T-cell (primary cell): ENCODE measurements at regions of chr4 and their contacts with region 1.

Region 1: DNA sequence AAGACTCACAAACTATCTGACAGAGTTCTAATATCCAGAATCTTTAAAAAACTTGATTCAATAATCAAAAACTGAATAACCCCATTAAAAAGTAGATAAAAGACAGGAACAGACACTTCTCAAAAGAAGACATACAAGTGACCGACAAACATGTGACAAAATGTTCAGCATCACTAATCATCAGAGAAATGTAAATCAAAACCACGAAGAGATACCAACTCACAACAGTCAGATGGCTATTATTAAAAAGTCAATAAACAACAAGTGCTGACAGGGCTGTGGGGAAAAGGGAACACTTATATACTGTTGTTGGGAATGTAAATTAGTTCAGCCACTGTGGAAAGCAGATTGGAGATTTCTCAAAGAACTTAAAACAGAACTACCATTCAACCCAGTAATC is 138.1 kb upstream of the RASGEF1B start:
- DNase-seq: no peak
- ATAC-seq: no peak
- H3K4me3 ChIP-seq: no peak overlapping the region
- H3K4me3 Mint-ChIP-seq: no peak overlapping the region
- H3K27ac ChIP-seq: no peak overlapping the region
- H3K27ac Mint-ChIP-seq: no peak overlapping the region
- H3K4me1 ChIP-seq: peaks cover 0 to 13% of the 10 kb centered on the region in 2 experiments
- H3K4me1 Mint-ChIP-seq: peaks cover 5 to 9% (median 7%) of the 10 kb centered on the region in 3 donors
- H3K27me3 ChIP-seq: no peaks in the 10 kb centered on the region
- H3K27me3 Mint-ChIP-seq: no peaks in the 10 kb centered on the region

Region 2: DNA sequence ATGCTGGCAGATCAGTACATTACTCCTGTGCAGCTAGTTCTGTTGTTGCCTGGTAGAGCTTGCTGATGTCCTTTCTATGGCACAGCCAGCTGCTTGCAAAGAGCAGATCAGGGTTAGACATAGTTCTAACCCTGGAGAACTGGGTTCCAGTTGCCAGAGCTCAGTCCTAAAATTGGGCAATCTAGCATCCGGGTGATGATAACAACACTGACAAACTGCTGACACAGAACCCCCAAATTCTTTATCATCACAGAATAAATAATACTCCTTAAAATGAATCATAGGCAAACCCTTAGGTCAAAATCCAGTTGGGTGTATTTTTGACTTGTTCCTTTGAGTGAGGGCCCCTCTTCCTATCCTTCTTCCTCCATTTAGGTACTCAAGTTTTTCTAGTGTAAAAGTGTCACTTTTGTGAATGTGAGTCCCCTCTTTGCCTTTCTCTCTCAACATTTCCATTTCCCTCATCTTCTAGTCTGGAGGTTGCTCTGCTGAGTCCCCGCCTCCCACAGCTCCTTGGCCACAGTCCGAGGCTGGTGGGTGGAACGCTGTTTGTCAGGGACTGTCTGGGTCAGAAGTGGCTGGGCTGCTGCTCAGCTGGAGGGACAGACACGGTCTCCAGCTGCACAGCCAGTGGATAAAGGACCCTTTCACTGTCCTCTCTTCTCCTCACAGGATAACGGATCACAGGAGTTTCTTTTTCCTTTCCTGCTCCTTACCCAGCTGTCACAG is 44.5 kb before region 1 on chr4:
- CTCF ChIA-PET with region 1: no interaction called
- POLR2A ChIA-PET with region 1: no interaction called
- DNase-seq: no peak
- ATAC-seq: no peak
- H3K4me3 ChIP-seq: no peak overlapping the region
- H3K4me3 Mint-ChIP-seq: no peak overlapping the region
- H3K27ac ChIP-seq: no peak overlapping the region
- H3K27ac Mint-ChIP-seq: no peak overlapping the region
- H3K4me1 ChIP-seq: peaks cover 0 to 7% of the 10 kb centered on the region in 2 experiments
- H3K4me1 Mint-ChIP-seq: peaks cover 11 to 22% (median 14%) of the 10 kb centered on the region in 3 donors
- H3K27me3 ChIP-seq: no peaks in the 10 kb centered on the region
- H3K27me3 Mint-ChIP-seq: no peaks in the 10 kb centered on the region

Region 3: DNA sequence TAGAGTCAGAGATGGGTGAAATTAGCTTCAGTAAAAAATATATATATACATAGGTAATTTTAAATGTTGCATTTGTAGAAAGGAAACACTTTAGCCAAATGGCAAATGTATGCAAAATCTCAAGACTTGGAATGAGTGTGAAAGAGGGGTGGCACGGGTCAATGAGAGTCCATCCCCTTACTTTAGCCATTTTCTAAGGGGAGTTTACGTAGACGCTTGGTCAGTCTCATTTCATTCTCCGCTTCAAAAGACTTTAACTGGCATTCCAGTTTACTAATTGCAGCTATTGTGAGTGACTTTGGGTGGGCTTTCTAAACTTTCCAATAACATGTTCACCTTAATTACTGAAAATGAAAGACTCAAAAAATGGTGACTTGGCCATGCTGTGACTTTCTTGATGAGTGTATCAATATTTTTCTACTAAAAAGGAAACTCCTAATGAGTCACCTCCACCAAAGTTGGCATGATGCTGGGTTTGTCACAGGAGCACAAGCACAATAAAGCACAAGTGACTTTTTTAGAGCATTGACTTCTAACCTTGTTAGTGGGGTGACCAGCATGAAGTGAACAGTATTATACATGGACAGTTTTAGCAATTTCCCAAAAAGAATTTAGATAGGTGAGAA is 217.8 kb after region 1 on chr4:
- CTCF ChIA-PET with region 1: no interaction called
- POLR2A ChIA-PET with region 1: interaction called in 1 of 2 experiments, 11 read pairs
- DNase-seq: no peak
- ATAC-seq: no peak
- H3K4me3 ChIP-seq: no peak overlapping the region
- H3K4me3 Mint-ChIP-seq: no peak overlapping the region
- H3K27ac ChIP-seq: no peak overlapping the region
- H3K27ac Mint-ChIP-seq: no peak overlapping the region
- H3K4me1 ChIP-seq: no peaks in the 10 kb centered on the region
- H3K4me1 Mint-ChIP-seq: no peaks in the 10 kb centered on the region
- H3K27me3 ChIP-seq: no peaks in the 10 kb centered on the region
- H3K27me3 Mint-ChIP-seq: no peaks in the 10 kb centered on the region